ENCODE measurements at regions of chr7 and their contacts with region 1.

Region 1: GRCh38 chr7:77657427-77658224 is 38.6 kb upstream of the RSBN1L start:
- DNase-seq: peak; percentile 62
- H3K4me3 ChIP-seq: no peak overlapping the region
- H3K27ac ChIP-seq: no peak overlapping the region
- H3K4me1 ChIP-seq: no peaks in the 10 kb centered on the region
- H3K27me3 ChIP-seq: no peaks in the 10 kb centered on the region

Region 2: GRCh38 chr7:77940647-77941046 is 283.0 kb after region 1 on chr7:
- in situ Hi-C with region 1: loop called (anchors 25 kb)
- DNase-seq: peak; percentile 71
- H3K4me3 ChIP-seq: no peak overlapping the region
- H3K27ac ChIP-seq: no peak overlapping the region
- H3K4me1 ChIP-seq: no peaks in the 10 kb centered on the region
- H3K27me3 ChIP-seq: no peaks in the 10 kb centered on the region